Tibial artery (tissue), 4 donors: ENCODE measurements at regions of chr17 and their contacts with region 1.

Region 1: DNA sequence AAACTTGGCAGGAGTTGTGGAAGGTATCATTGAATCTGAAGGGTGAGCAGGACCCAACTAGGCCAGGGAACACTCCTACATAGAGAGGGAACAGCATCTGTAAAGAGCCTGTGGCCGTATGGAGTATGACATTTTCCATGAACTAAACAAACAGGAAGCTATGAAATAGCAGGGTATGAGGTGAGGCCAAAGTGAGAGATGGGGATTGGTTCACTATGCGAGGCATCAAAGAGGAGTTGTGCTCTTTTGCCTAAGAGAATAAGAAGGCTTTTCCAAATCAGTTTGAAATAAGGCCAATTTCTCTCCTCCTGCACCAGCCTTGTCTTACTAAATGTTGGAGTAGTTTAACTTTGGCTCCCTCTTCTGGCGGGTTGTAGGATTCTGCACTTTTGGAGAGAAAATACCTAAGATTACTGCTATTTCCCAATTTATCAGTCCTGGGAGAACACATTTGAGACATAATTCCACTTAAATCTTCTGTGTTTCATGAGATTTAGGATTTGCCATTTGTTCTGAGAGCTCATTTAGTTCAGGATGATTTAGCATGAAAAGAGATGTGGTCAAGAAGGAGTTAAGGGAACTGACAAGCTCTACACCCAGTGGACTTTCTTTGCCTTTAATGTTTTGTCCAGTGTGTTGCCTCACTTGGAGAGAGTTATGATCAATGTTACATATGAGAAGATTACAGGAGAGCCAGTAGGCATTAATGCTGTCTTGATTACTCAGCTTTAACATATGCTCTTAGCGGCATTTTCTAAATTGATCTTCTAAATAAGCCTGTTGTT is 55.4 kb downstream of the TNRC6C start:
- DNase-seq: peak in 1 of 2 donors; percentile 74
- H3K4me3 ChIP-seq: no peak overlapping the region
- H3K27ac ChIP-seq: peak overlapping the region in 1 of 2 donors; percentile 5
- H3K4me1 ChIP-seq: peaks cover 0 to 4% (median 0%) of the 10 kb centered on the region in 4 donors
- H3K27me3 ChIP-seq: no peaks in the 10 kb centered on the region
- CTCF ChIP-seq: peak; percentile 75 to 86

Region 2: GRCh38 chr17:77068915-77069314 is 945.0 kb before region 1 on chr17:
- intact Hi-C with region 1: no loop called
- DNase-seq: no peak
- H3K4me3 ChIP-seq: no peak overlapping the region
- H3K27ac ChIP-seq: no peak overlapping the region
- H3K4me1 ChIP-seq: no peaks in the 10 kb centered on the region
- H3K27me3 ChIP-seq: peaks cover 0 to 62% of the 10 kb centered on the region in 2 donors
- CTCF ChIP-seq: no peak

Region 3: DNA sequence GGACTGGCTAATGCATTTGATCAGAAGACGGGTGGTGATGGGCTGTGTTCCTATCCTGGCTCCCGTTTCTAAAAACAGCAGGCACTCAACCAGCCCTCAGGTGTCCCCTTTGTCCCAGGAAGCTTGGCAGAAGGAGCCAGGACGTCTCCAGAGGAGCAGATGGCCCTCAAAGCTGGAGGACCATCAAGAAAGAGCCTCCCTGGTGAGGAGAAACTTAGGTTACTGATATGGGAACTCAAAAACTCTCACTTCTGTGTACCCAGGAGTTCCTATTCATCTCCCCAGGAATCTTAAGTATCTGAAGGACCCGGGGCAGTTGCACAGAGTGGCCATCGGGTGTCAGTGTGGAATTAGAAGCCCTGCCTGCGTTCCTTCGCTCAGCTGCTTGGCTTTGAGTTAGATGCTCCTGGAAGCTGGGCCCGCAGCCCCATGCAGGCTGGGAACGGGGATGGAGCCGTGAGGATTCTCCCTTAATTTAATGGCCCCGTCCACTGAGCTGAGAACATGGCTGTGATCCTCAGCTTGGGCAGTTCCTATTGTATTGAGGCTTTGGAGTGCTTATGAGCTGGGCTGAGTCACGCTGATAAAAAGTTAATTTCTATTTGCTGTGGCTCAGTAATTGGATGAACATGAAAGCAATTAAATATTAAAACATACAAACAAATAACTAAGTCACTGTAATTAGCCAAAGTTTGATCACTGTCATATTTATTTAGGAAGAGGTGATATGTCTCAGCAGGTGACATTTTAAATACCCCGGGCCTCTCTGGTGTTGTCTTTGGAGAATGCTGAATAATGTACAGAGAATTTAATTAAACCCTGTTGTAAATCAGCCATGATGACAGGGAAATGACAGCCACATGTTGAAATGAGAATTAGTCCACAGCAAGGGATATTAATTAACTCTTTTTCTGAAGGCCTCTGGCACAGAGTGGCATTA is 471.1 kb before region 1 on chr17:
- intact Hi-C with region 1: loop called (anchors 2 kb)
- DNase-seq: peak; percentile 89 to 90
- H3K4me3 ChIP-seq: no peak overlapping the region
- H3K27ac ChIP-seq: peak overlapping the region in 1 of 2 donors; percentile 46
- H3K4me1 ChIP-seq: peaks cover 0 to 18% (median 8%) of the 10 kb centered on the region in 4 donors
- H3K27me3 ChIP-seq: peaks cover 0 to 10% of the 10 kb centered on the region in 2 donors
- CTCF ChIP-seq: peak; percentile 95 to 97

Region 4: DNA sequence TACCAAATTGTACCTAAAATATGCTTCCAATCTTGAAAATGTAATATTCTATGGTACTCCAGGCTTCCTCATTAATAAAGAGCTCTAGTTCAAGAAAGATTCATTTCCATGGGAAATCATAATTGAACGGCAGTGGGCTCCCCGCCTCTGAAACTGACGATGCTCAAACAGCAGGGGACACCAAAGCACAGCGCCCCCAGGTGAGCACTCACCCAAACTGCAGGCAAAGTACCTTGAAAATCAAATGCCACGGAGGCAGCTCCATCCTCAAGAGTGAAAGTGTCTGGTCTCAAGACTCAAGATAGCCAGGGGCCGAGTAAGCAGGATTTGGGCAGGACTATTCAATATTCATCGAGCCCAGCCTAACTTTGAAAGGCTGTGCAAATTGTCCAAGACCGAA is 272.8 kb before region 1 on chr17:
- intact Hi-C with region 1: loop called (anchors 10 kb)
- DNase-seq: peak in 1 of 2 donors; percentile 52
- H3K4me3 ChIP-seq: no peak overlapping the region
- H3K27ac ChIP-seq: no peak overlapping the region
- H3K4me1 ChIP-seq: peaks cover 0 to 34% (median 24%) of the 10 kb centered on the region in 4 donors
- H3K27me3 ChIP-seq: no peaks in the 10 kb centered on the region
- CTCF ChIP-seq: no peak

Region 5: GRCh38 chr17:77942112-77942988 is 71.5 kb before region 1 on chr17:
- intact Hi-C with region 1: no loop called
- DNase-seq: no peak
- H3K4me3 ChIP-seq: no peak overlapping the region
- H3K27ac ChIP-seq: no peak overlapping the region
- H3K4me1 ChIP-seq: no peaks in the 10 kb centered on the region
- H3K27me3 ChIP-seq: no peaks in the 10 kb centered on the region
- CTCF ChIP-seq: no peak